ENCODE measurements at regions of chr7 and their contacts with region 1.

Region 1: GRCh38 chr7:17769918-17770317 is 170.4 kb downstream of the SNX13 start:
- DNase-seq: peak; percentile 42
- H3K4me3 ChIP-seq: no peak overlapping the region
- H3K27ac ChIP-seq: no peak overlapping the region
- H3K27me3 ChIP-seq: no peaks in the 10 kb centered on the region
- CTCF ChIP-seq: peak; percentile 82

Region 2: DNA sequence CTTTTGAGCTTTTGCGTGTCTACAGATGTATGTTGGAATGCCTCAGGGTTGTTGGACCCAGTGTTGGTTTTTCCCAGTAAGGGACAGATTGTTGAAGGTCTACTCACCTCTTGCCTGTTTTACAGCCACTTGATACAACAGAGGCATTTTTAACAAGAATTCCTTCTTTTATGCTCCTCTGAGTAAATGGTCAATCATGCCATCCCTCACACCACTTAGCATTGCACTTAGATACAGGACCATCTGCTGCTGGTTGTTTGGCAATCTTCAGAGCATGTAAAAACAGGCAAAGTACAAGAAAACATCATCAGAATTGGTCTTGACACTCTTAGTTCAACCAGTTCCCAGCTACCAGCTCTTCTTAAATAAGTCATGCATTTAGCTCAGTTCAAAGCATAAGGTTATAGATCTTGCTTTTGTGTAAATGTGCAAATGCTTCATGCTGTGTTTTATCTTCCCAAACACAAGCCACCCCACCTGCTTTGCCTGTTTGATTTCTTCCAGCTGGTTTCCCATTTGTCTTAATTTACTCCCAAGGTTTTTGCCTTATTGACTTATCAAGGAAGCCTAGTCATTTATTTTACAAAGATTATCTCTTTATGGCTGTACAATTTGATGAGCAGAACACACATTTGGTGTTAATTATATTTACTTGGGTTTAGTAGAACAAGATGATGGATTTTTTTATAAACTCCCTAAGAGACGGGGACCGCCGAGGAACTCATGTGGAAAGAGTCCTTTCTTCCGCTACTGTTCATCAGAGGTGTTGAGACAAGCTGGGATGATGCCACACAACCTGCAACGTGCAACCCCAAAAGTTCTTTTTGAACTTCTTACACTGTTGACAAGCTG is 334.9 kb before region 1 on chr7:
- CTCF ChIA-PET with region 1: no interaction called
- POLR2A ChIA-PET with region 1: no interaction called
- DNase-seq: no peak
- H3K4me3 ChIP-seq: no peak overlapping the region
- H3K27ac ChIP-seq: no peak overlapping the region
- H3K27me3 ChIP-seq: no peaks in the 10 kb centered on the region
- CTCF ChIP-seq: no peak

Region 3: GRCh38 chr7:17680943-17681351 is 89.0 kb before region 1 on chr7:
- CTCF ChIA-PET with region 1: interaction called, 10 read pairs
- POLR2A ChIA-PET with region 1: no interaction called
- DNase-seq: no peak
- H3K4me3 ChIP-seq: no peak overlapping the region
- H3K27ac ChIP-seq: no peak overlapping the region
- H3K27me3 ChIP-seq: no peaks in the 10 kb centered on the region
- CTCF ChIP-seq: peak; percentile 40

Region 4: DNA sequence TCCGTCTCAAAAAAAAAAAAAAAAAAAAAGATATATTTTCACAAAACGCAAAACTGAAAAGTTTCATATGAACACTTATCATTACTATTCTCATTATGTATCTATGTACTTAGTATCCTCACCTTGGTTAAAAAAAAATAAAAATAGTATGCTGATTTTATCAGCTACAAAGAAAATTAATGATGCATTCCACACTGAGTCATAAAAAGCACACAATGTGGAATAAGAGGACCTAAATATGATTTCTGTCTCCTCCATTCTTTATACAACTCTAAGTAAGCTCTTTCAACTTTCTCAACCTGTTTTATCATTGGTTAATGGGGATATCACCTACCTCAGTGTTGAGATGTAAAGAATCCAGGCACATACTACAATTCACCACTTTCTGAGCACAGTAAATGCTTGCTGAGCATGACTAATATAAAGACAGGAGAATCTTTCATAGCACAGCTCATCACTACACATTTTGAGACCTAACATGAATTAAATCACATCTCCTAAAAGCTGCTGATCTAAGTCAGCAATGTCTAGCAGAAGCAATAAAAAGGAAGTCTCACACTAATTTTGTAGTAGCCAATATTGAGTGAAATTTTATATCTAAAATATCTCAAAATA is 167.7 kb after region 1 on chr7:
- CTCF ChIA-PET with region 1: interaction called, 13 read pairs
- POLR2A ChIA-PET with region 1: no interaction called
- DNase-seq: no peak
- H3K4me3 ChIP-seq: peak overlapping the region; percentile 75; the same call in 1 of the 2 replicates
- H3K27ac ChIP-seq: no peak overlapping the region
- H3K27me3 ChIP-seq: no peaks in the 10 kb centered on the region
- CTCF ChIP-seq: no peak

Region 5: DNA sequence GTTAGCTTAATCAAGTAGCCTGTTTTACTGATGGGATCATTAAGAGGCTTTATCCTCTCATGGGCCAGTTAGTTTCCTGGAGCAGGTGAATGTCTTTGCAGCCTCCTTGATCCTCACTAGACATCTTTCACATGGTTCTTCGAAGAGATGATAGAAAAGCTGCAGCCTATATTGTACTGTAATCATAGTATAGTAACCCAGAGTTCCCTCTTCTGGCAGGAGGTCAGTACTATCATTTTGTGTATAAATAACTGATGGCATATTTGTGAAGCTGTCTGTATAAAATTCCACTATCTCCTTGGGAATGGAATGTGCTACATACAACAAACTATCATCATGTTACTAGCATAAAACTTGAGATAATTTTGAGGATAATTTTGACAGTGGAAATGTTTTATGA is 381.5 kb after region 1 on chr7:
- CTCF ChIA-PET with region 1: interaction called, 13 read pairs
- POLR2A ChIA-PET with region 1: no interaction called
- DNase-seq: no peak
- H3K4me3 ChIP-seq: no peak overlapping the region
- H3K27ac ChIP-seq: no peak overlapping the region
- H3K27me3 ChIP-seq: no peaks in the 10 kb centered on the region
- CTCF ChIP-seq: peak; percentile 23

Region 6: GRCh38 chr7:18345641-18346234 is 575.8 kb after region 1 on chr7:
- CTCF ChIA-PET with region 1: interaction called, 78 read pairs
- POLR2A ChIA-PET with region 1: no interaction called
- DNase-seq: no peak
- H3K4me3 ChIP-seq: no peak overlapping the region
- H3K27ac ChIP-seq: no peak overlapping the region
- H3K27me3 ChIP-seq: no peaks in the 10 kb centered on the region
- CTCF ChIP-seq: peak; percentile 89